Brain microvascular endothelial cell (primary cell): ENCODE measurements at regions of chr1 and their contacts with region 1.

Region 1: DNA sequence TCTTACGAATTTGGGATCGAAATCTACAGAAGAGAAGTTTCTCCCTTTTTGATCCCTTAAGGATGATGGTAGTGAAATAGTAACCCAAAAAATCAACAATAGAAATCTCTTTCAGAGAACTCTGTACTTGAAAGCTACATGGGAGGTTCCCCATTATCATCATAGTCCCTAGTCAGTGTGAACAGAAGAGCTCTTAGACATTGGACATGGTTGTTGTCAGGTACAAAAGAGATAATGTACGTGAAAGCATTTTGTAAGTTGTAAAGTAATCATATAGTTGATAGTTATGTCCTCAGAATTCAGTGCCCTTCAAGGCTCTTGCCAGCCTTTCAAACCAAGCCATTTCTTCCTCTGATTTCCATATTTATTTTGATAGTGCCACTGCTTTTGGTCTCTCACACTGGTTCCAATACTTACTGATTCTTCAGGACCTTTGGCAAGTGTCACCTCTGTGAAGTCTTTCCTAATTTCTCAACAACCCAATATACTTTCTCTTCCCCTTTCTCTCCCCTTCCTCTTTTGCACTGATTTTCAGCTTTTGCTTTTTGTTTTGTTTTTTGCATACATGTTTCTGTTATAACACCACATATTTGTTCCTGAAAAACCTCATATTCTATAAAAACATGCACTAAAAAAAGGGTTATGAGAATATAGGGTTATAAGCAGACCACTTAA is 22.4 kb downstream of the VPS45 start:
- DNase-seq: no peak
- H3K4me3 ChIP-seq: no peak overlapping the region
- H3K27ac ChIP-seq: no peak overlapping the region
- H3K27me3 ChIP-seq: no peaks in the 10 kb centered on the region
- CTCF ChIP-seq: no peak

Region 2: DNA sequence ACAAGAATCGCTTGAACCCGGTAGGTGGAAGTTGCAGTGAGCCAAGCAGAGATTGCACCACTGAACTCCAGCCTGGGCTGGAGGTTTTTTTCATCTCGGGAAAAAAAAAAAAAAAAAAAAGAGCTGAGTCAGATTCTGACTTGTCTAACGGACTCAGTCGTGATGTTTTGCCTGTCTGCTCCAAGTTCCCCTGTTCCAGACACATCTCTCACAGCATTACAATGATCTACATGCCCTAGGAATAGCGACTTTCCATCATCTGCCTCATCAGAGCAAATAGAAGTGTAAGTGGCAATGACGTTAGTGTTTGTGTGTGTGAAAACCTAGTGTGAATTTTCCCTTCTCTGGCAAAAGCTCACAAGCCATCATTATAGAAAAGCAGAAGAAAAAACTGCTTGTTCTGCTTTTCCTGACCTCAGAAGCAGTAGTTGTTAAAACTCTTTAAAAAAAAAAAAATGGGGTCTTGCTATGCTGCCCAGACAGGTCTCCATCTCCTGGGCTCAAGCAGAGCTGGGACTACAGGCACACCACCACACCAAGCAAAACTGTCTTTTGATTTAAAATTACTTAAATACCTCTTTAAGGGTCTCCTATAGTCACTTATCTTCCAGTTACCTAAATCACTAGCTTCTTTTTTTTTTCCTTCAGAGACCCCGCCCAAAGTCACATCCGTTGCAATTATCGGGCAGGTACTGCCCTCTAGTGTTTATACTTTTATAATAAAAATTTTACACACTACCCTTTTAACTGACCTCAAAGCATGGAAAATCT is 97.0 kb after region 1 on chr1:
- in situ Hi-C with region 1: loop called (anchors 25 kb)
- DNase-seq: peak; percentile 74
- H3K4me3 ChIP-seq: peak overlapping the region; percentile 30
- H3K27ac ChIP-seq: peak overlapping the region; percentile 90
- H3K27me3 ChIP-seq: no peaks in the 10 kb centered on the region
- CTCF ChIP-seq: peak; percentile 45

Region 3: DNA sequence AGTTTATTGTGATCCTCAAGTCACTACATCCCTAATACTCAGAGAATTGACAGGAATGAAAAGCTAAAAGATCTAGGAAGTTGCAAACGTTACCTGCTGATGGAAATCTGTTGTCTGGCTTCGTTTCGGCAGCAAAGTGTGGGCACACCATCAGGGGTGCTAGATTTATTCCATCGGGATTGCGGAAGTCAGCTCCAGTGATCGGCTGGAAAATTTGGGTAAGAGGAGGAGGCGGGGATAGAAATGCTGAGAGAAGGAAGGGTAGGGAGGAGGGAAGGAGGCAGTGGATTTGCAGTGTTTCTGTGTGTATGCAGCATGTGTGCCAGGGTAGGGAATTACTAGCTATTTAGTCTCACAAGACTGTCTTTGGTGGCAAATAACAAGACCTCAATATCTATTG is 718.1 kb after region 1 on chr1 and contains the start of gene CTSK:
- in situ Hi-C with region 1: no loop called
- DNase-seq: no peak
- H3K4me3 ChIP-seq: peak within 1 kb of the TSS; percentile 15
- H3K27ac ChIP-seq: no peak within 1 kb of the TSS
- H3K27me3 ChIP-seq: no peaks in the 10 kb centered on the region
- CTCF ChIP-seq: no peak